Gastrocnemius medialis (tissue), 4 donors: ENCODE measurements at regions of chr12 and their contacts with region 1.

Region 1: DNA sequence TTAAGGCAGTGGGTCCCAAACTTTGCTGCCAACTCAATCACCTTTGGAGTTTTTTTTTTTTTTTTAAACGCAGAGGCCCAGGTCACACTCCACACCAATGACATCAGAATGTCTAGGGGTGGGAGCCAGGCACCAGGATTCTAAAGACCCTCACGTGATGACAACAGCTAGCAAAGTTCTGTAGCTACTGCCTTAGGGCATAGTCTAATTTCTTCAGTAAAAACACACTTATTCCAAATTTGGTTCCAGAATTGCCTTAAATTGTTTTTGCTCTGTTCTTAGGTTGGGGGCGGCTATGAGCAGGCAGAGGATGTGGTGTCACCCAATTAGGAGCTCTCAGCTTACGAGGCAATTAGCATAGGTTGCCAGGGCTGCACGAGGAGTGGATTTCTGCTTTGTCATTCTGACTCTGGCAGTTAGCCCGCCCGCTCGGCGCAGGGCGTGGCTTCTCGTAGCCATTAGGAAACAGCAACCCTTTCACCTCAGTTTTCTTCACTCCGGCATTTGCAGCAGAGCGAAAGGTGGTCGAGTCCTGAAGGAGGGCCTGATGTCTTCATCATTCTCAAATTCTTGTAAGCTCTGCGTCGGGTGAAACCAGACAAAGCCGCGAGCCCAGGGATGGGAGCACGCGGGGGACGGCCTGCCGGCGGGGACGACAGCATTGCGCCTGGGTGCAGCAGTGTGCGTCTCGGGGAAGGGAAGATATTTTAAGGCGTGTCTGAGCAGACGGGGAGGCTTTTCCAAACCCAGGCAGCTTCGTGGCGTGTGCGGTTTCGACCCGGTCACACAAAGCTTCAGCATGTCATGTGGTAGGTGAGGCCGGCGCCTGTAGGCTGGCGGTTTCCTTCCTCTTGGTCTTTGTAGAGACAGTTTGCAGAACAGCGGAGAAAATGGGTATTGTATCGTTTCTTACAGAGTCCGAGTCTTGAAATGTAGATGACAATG is 16.7 kb upstream of the EID3 start:
- DNase-seq: peak; percentile 88 to 93
- ATAC-seq: peak; percentile 83 to 84
- H3K4me3 ChIP-seq: peak overlapping the region; percentile 66 to 86 (median 80)
- H3K27ac ChIP-seq: peak overlapping the region; percentile 93 to 99 (median 96)
- H3K4me1 ChIP-seq: peaks cover 24% of the 10 kb centered on the region in 2 donors
- H3K27me3 ChIP-seq: no peaks in the 10 kb centered on the region
- CTCF ChIP-seq: no peak
- POLR2A ChIP-seq: peak; percentile 87 to 88

Region 2: DNA sequence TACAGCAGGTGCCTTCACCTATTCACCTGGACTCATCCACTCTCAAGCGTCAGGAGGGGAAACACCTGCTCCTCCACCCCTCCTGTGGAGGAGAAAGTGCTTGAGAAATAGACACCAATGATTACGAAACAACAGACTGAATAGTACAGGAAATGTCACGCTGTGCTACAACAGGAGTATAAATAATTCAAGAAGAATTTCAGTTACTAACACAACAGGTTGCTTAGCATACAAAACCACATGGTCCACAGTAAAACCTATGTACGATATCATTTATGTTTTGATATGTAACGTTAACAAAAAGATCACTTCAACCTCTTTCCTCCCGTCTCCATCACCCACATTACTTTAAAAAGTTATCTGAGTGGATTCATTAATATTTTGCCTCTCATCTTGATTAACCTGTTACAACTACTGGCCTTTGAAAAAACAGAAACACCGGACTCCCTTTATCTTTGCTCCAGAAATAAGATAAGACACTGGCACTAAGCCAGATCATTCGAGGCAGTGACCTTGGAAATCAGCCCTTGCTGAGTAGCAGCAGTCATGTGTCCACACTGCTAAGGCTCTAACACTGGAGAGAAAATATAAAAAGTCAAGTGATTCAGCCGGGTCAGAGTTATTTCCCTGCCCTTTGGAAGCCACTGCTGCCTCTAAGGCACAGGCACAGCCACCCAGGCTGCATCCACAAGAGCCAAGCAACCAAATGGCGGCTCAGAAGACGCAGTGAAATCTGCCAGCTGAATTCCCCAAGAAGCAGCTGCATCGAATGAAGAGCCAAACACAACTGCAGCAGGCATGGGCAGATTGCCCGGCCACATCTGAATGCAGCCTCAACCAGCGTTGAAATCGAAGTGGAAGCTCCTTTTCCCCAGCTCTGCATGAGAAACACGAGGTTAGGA is 486.7 kb before region 1 on chr12:
- in situ Hi-C with region 1: no loop called
- intact Hi-C with region 1: loop called (anchors 10 kb)
- DNase-seq: peak; percentile 70 to 77
- ATAC-seq: peak; percentile 87 to 88
- H3K4me3 ChIP-seq: peak overlapping the region; percentile 2 to 35 (median 26)
- H3K27ac ChIP-seq: peak overlapping the region; percentile 81 to 94 (median 90)
- H3K4me1 ChIP-seq: peaks cover 29 to 34% of the 10 kb centered on the region in 2 donors
- H3K27me3 ChIP-seq: no peaks in the 10 kb centered on the region
- CTCF ChIP-seq: no peak
- POLR2A ChIP-seq: no peak

Region 3: GRCh38 chr12:103965590-103966504 is 321.0 kb before region 1 on chr12 and contains the start of gene TDG:
- in situ Hi-C with region 1: no loop called
- intact Hi-C with region 1: loop called (anchors 5 kb)
- DNase-seq: peak; percentile 98 to 99
- ATAC-seq: peak; percentile 99 to 100
- H3K4me3 ChIP-seq: peak within 1 kb of the TSS; percentile 74 to 97 (median 88)
- H3K27ac ChIP-seq: peak within 1 kb of the TSS; percentile 90 to 97 (median 95)
- H3K4me1 ChIP-seq: peaks cover 33 to 46% of the 10 kb centered on the region in 2 donors
- H3K27me3 ChIP-seq: no peaks in the 10 kb centered on the region
- CTCF ChIP-seq: peak in 4 of 5 experiments; percentile 26 to 43 (median 35)
- POLR2A ChIP-seq: peak; percentile 86 to 88
- total RNA-seq, gene TDG: 5.1 to 17.5 (median 9.0) TPM

Region 4: DNA sequence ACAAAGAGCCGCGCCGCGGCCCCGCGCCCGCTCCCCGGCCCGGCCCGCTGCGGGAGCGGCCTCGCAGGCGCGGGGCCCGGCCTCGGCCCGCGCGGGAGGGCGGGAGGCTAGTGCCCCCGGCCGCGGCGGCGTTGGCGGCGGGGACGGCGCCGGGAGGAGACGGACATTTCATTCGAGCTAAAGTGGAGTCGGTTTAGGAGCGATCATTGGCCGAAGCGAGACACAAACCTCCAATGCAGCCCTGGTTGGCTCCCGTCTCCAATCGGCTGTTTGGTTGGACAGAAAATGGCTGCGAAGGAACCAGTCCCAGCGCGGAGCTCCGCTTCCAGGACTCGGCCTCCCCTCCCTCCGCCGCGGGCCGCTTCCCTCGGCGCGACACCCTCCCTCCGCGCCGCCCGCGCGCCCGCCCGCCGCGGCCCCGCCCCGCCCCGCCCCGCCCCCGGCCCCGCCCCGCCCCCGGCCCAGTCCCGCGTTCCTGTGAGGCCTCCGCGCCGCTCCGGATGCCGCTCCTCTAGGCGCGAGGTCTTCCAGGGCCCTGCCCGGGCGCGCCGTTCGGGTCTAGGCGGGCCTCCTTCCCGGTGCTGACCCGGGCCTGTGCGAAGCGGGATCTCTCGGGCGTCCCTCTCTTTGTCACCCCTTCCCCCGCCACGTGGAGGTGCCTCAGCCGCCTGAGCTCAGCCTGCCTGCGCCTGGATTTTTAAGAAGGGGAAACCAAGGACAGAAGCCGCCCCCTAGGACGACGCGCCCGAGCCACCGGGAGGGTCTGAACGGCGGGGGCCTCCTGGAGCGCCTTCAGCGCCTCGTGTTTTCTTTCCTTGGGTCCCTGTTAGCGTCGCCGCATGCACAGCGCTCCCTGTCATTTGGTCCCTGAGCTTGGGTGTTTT is 148.7 kb before region 1 on chr12 and contains the start of gene NFYB:
- in situ Hi-C with region 1: no loop called
- intact Hi-C with region 1: loop called (anchors 2 kb)
- DNase-seq: peak; percentile 97
- ATAC-seq: peak; percentile 99
- H3K4me3 ChIP-seq: peak within 1 kb of the TSS; percentile 64 to 78 (median 70)
- H3K27ac ChIP-seq: peak within 1 kb of the TSS; percentile 87 to 93 (median 90)
- H3K4me1 ChIP-seq: peaks cover 30 to 35% of the 10 kb centered on the region in 2 donors
- H3K27me3 ChIP-seq: no peaks in the 10 kb centered on the region
- CTCF ChIP-seq: no peak
- POLR2A ChIP-seq: peak; percentile 58 to 72
- total RNA-seq, gene NFYB: 16.5 to 35.1 (median 21.4) TPM

Region 5: DNA sequence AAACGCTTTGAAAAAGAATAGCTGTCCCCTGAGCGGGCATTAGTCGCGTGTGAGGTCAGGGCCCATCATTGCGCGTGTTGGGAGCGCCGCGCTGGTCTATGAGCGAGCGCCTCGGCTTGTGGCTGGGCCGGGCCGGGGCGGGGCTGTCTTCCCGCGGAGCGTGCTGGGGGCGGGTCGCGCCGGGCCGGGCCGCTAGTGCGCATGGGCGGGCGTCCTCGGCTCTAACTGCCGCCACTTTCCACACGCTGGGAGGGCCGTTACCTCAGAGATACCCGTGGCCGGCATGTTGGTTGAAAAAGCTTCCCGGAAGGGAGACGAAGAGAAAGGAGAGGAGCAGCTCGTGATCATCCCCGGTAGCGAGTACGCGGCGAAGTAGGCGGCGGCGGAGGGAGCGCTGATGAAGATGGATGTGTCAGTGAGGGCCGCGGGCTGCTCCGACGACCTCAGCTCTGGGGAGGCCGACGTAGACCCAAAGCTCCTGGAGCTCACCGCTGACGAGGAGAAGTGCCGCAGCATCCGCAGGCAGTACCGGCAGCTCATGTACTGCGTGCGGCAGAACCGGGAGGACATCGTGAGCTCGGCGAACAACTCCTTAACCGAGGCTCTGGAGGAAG is 16.8 kb after region 1 on chr12 and contains the start of gene EID3:
- in situ Hi-C with region 1: no loop called
- intact Hi-C with region 1: loop called (anchors 1 kb)
- DNase-seq: peak; percentile 75 to 82
- ATAC-seq: peak; percentile 87 to 88
- H3K4me3 ChIP-seq: peak within 1 kb of the TSS; percentile 47 to 57 (median 54)
- H3K27ac ChIP-seq: peak within 1 kb of the TSS; percentile 73 to 86 (median 80)
- H3K4me1 ChIP-seq: peaks cover 48 to 64% of the 10 kb centered on the region in 2 donors
- H3K27me3 ChIP-seq: no peaks in the 10 kb centered on the region
- CTCF ChIP-seq: no peak
- POLR2A ChIP-seq: peak; percentile 18 to 43
- total RNA-seq, gene EID3: 0.51 to 3.4 (median 1.00) TPM

Region 6: DNA sequence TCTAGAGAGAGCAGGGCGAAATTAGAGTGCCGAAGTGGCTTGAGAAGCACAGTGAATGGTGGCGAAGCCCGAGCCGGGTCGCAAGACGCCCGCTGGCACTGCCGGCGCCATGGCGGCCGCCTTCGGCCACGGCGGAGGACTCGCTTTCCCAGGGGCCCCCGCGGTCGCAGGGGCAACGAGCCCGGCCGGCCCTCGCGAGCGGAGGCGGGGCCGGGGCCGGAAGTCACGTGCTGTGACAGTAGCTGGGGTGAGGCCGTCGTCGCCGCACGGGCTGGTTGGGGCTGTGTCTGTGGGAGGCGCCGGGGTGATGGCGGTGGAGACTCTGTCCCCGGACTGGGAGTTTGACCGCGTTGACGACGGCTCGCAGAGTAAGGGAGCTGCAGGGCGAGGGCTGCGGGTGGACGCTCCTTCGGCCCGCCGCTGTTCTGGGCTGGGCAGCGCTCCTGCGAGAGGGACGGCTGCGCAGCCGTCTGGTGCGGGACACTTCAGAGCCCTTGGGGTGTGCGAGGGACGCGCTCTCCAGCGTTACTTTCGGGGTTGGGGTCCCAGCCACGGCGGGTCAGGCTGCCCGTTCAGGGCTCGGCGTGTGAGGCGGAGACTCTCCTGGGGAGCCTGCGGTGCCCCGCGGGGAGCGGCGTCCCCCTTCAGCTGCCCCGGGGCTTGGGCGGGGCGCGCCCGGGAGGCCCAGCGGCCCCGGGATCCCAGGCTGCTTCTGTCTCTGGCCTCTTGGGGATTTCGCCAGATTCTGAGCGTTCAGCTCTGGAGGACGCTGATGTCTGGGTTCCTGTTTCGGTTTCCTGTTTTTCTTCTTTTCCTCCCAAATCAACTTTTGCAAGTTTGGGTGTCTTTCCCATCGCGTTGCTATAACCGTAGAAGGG is 820.9 kb after region 1 on chr12 and contains the start of gene WASHC4:
- in situ Hi-C with region 1: no loop called
- intact Hi-C with region 1: loop called (anchors 5 kb)
- DNase-seq: peak; percentile 90
- ATAC-seq: peak; percentile 94 to 96
- H3K4me3 ChIP-seq: peak within 1 kb of the TSS; percentile 91 to 95 (median 93)
- H3K27ac ChIP-seq: peak within 1 kb of the TSS; percentile 92 to 98 (median 96)
- H3K4me1 ChIP-seq: peaks cover 30 to 32% of the 10 kb centered on the region in 2 donors
- H3K27me3 ChIP-seq: no peaks in the 10 kb centered on the region
- CTCF ChIP-seq: peak in 1 of 5 experiments; percentile 16
- POLR2A ChIP-seq: peak; percentile 96 to 97
- total RNA-seq, gene WASHC4: 23.6 to 53.2 (median 36.7) TPM